HEK293 (cell line): ENCODE measurements at regions of chr17 and their contacts with region 1.

Region 1: DNA sequence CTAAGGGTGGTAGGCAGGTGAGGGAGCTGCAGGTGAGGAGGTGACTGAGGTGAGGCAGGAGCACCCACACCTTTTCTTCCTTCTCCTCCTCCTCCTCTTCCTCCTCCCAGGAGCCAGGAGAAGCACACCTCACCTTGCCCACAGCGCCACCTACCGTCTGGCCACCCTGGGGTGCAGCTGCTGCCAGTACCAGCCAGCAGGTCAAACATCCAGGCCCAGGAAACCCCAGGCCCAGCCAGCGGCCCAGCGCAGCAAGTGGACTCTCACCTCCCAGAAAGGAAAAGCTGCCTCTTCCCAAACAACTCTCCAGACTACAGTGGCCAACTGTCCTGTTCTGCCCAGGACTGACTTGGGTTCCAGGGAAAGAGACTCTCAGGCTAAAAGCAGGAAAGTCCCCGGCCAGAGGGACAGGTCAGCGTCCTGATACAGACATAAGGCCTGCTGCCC is 22.7 kb downstream of the PEMT start:
- H3K4me3 ChIP-seq: no peak overlapping the region
- H3K27ac ChIP-seq: no peak overlapping the region
- H3K4me1 ChIP-seq: no peaks in the 10 kb centered on the region
- CTCF ChIP-seq: peak; percentile 81

Region 2: GRCh38 chr17:17366941-17367875 is 201.6 kb before region 1 on chr17:
- CTCF ChIA-PET with region 1: interaction called, 12 read pairs
- POLR2A ChIA-PET with region 1: no interaction called
- H3K4me3 ChIP-seq: no peak overlapping the region
- H3K27ac ChIP-seq: no peak overlapping the region
- H3K4me1 ChIP-seq: no peaks in the 10 kb centered on the region
- CTCF ChIP-seq: no peak

Region 3: DNA sequence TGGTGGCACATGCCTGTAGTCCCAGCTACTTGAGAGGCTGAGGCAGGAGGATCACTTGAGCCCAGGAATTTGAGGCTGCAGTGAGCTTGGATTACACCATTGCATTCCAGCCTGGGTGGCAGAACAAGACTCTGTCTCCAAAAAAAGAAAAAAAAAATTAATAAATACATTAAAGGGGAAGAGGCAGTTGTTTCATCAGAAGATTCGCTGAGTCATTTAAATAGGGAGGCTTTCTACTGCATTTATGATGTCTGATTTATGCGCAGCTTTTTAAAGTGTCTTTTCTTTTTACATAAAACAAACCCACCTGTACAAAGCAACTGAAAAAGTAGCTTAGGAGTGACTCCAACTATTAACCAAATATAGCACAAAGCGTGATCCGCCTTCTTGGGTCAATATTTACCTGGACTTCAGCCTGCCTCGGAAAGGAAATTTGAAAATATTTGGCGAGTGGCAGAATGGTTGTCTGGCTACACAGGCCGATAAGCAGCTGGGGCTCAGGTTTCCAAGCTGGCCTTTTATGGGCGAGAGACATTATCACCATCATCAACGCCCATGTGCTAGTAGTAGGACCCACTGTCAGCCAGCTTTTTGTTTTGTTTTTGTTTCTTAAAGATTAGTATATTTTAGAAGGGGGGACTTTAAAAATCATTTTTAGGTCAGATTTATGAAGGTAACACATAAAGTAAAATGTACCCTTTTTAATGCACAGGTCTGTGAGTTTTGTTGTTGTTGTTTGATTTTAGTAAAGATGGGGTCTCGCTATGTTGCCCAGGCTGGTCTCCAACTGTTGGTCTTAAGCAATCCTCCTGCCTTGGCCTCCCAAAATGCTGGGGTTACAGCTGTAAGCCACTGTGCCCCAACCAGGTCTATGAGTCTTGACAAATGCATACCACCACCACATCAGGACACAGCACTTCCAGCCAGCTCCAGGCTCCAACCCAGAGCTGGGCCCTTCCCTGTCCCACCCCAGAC is 30.1 kb before region 1 on chr17:
- CTCF ChIA-PET with region 1: interaction called, 17 read pairs
- POLR2A ChIA-PET with region 1: no interaction called
- H3K4me3 ChIP-seq: no peak overlapping the region
- H3K27ac ChIP-seq: no peak overlapping the region
- H3K4me1 ChIP-seq: peaks cover 7% of the 10 kb centered on the region
- CTCF ChIP-seq: no peak

Region 4: GRCh38 chr17:17580662-17581470 is 12.1 kb after region 1 on chr17:
- CTCF ChIA-PET with region 1: interaction called, 53 read pairs
- POLR2A ChIA-PET with region 1: no interaction called
- H3K4me3 ChIP-seq: no peak overlapping the region
- H3K27ac ChIP-seq: no peak overlapping the region
- H3K4me1 ChIP-seq: 0 out of 2 replicates have a peak, but pooled peaks cover 3% of the 10 kb centered on the region
- CTCF ChIP-seq: no peak

Region 5: GRCh38 chr17:17591355-17592298 is 22.9 kb after region 1 on chr17 and contains the start of gene PEMT:
- CTCF ChIA-PET with region 1: interaction called, 53 read pairs
- POLR2A ChIA-PET with region 1: interaction called, 4 read pairs
- H3K4me3 ChIP-seq: peak within 1 kb of the TSS; percentile 54
- H3K27ac ChIP-seq: peak within 1 kb of the TSS; percentile 70
- H3K4me1 ChIP-seq: peaks cover 7% of the 10 kb centered on the region; the same call in 1 of the 2 replicates
- CTCF ChIP-seq: no peak

Region 6: GRCh38 chr17:17613708-17614114 is 44.9 kb after region 1 on chr17:
- CTCF ChIA-PET with region 1: interaction called, 10 read pairs
- POLR2A ChIA-PET with region 1: no interaction called
- H3K4me3 ChIP-seq: no peak overlapping the region
- H3K27ac ChIP-seq: no peak overlapping the region
- H3K4me1 ChIP-seq: no peaks in the 10 kb centered on the region
- CTCF ChIP-seq: peak; percentile 57

Region 7: GRCh38 chr17:17641621-17642409 is 73.0 kb after region 1 on chr17:
- CTCF ChIA-PET with region 1: interaction called, 18 read pairs
- POLR2A ChIA-PET with region 1: no interaction called
- H3K4me3 ChIP-seq: no peak overlapping the region
- H3K27ac ChIP-seq: no peak overlapping the region
- H3K4me1 ChIP-seq: no peaks in the 10 kb centered on the region
- CTCF ChIP-seq: peak; percentile 88

Region 8: DNA sequence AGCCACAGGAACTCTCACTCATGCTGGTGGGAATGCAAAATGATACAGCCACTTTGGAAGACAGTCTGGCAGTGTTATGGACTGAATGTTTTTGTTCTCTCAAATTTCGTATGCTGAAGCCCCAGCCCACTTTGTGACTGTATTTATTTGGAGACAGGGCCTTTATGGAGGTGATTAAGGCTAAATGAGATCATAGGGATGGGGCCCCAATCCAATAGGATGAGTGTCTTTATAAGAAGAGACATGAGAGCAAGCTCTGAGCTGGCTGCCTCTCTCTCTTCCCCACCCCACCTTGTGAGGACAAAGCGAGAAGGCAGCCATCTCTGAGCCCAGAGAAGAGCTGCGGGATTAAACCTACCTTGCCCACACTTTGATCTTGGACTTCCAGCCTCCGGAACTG is 90.6 kb after region 1 on chr17:
- CTCF ChIA-PET with region 1: no interaction called
- POLR2A ChIA-PET with region 1: no interaction called
- H3K4me3 ChIP-seq: no peak overlapping the region
- H3K27ac ChIP-seq: no peak overlapping the region
- H3K4me1 ChIP-seq: no peaks in the 10 kb centered on the region
- CTCF ChIP-seq: no peak

Region 9: GRCh38 chr17:17712268-17712924 is 143.6 kb after region 1 on chr17:
- CTCF ChIA-PET with region 1: no interaction called
- POLR2A ChIA-PET with region 1: no interaction called
- H3K4me3 ChIP-seq: no peak overlapping the region
- H3K27ac ChIP-seq: peak overlapping the region; percentile 41; the same call in 1 of the 2 replicates
- H3K4me1 ChIP-seq: peaks cover 32% of the 10 kb centered on the region
- CTCF ChIP-seq: no peak

Region 10: DNA sequence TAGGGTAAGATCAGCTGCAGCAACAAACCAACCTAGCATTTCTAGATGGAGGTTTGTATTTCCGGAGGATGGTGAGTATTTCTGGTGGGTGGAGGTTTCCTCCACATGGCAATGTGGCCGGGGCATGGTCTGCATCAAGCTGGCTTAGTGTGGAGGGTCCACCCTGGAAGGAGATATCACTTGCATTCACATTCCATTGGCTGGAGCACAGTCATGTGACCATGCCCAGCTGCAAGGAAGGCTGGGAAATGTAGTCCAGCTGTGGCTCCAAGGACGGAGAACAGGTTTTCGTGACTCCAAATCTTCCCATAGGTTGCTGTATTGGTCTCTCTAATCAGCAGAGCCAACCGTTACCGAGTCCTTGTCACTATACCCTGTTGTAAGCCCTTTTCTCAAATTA is 181.1 kb after region 1 on chr17:
- CTCF ChIA-PET with region 1: no interaction called
- POLR2A ChIA-PET with region 1: no interaction called
- H3K4me3 ChIP-seq: no peak overlapping the region
- H3K27ac ChIP-seq: no peak overlapping the region
- H3K4me1 ChIP-seq: peaks cover 8% of the 10 kb centered on the region; the same call in 1 of the 2 replicates
- CTCF ChIP-seq: no peak